CD8-positive, alpha-beta T cell (primary cell): ENCODE measurements at regions of chrX and their contacts with region 1.

Region 1: DNA sequence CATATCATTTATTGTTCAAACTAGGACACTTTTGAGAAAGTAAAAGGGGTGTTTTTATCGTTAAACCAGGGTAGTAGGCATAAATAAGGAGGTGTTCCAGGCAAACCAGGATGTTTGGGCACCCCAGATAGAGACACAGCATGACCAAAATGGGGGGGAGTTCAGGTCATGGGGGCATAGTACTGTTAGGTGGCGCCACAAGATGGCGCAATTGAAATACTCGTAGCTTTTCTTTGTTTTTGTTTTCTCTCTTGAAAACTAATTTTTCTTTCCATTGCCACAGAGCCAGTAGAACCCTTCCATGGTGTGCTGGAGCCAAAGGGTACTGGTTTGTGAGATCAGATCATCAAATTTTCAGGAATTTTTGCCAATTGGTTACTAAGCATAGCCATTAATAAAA is 283.4 kb downstream of the BCOR start:
- DNase-seq: peak in 8 of 9 experiments; percentile 3 to 76 (median 49)
- ATAC-seq: peak; percentile 64
- H3K4me3 ChIP-seq: no peak overlapping the region
- H3K4me3 Mint-ChIP-seq: no peak overlapping the region
- H3K27ac ChIP-seq: no peak overlapping the region
- H3K27ac Mint-ChIP-seq: no peak overlapping the region
- H3K4me1 ChIP-seq: no peaks in the 10 kb centered on the region
- H3K4me1 Mint-ChIP-seq: peaks cover 8% of the 10 kb centered on the region
- H3K27me3 ChIP-seq: no peaks in the 10 kb centered on the region
- H3K27me3 Mint-ChIP-seq: peaks cover 3% of the 10 kb centered on the region
- CTCF ChIP-seq: peak; percentile 56

Region 2: GRCh38 chrX:39730662-39731397 is 83.6 kb before region 1 on chrX:
- CTCF ChIA-PET with region 1: interaction called, 7 read pairs
- POLR2A ChIA-PET with region 1: no interaction called
- intact Hi-C with region 1: loop called (anchors 1 to 5 kb)
- DNase-seq: peak in 8 of 9 experiments; percentile 32 to 71 (median 52)
- ATAC-seq: peak; percentile 74
- H3K4me3 ChIP-seq: no peak overlapping the region
- H3K4me3 Mint-ChIP-seq: peak overlapping the region; percentile 29
- H3K27ac ChIP-seq: no peak overlapping the region
- H3K27ac Mint-ChIP-seq: no peak overlapping the region
- H3K4me1 ChIP-seq: no peaks in the 10 kb centered on the region
- H3K4me1 Mint-ChIP-seq: peaks cover 5% of the 10 kb centered on the region
- H3K27me3 ChIP-seq: no peaks in the 10 kb centered on the region
- H3K27me3 Mint-ChIP-seq: no peaks in the 10 kb centered on the region
- CTCF ChIP-seq: peak; percentile 52

Region 3: GRCh38 chrX:40068044-40068443 is 253.7 kb after region 1 on chrX:
- CTCF ChIA-PET with region 1: no interaction called
- POLR2A ChIA-PET with region 1: no interaction called
- intact Hi-C with region 1: loop called (anchors 10 kb)
- DNase-seq: peak in 3 of 9 experiments; percentile 30 to 59 (median 40)
- ATAC-seq: peak; percentile 63
- H3K4me3 ChIP-seq: no peak overlapping the region
- H3K4me3 Mint-ChIP-seq: no peak overlapping the region
- H3K27ac ChIP-seq: no peak overlapping the region
- H3K27ac Mint-ChIP-seq: no peak overlapping the region
- H3K4me1 ChIP-seq: peaks cover 36% of the 10 kb centered on the region
- H3K4me1 Mint-ChIP-seq: peaks cover 55% of the 10 kb centered on the region
- H3K27me3 ChIP-seq: no peaks in the 10 kb centered on the region
- H3K27me3 Mint-ChIP-seq: no peaks in the 10 kb centered on the region
- CTCF ChIP-seq: no peak

Region 4: DNA sequence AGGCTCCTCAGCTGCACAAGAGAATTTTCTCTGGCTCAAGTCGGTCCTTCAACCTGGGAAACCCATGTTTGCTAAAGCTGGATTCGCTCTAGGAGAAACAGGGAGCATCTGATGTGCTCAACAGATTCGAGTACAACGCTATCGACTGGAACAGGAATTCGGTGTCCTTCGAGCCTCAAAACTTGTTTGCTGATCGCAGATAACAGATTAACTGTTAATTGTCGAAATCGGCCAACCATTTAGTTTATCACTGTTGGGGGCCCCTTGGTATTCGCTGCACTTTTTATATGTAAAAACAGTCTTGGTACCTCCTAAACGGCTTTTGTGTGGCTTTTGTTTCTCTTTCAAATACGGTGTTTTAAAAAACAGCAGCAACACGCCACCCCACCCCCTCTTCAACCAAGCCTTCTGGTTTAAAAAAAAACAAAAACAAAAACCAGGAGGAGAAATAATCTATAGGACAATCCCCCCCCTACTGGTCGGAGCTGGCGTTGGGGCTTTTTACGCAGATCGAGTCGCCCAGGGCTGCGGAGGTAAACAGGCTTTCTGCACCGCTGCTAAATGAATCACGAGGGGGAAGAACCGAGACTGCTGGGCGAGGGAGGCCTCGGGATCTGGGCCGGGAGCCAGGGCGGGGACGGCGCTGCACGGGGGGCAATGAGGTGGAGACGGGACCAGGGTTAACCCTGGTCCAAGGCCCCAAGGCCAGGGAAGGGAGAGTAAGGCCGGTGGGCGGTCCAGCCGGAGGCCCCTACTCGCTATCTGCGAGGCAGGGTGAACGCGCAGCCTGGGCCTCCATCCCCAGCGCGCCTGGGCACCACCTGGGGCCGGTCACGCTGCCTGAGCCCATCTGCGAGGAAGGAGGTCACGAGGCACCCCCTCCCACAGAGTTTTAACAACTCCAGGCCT is 355.1 kb after region 1 on chrX:
- CTCF ChIA-PET with region 1: no interaction called
- POLR2A ChIA-PET with region 1: interaction called, 3 read pairs
- intact Hi-C with region 1: loop called in 1 of 2 experiments (anchors 5 kb)
- DNase-seq: peak; percentile 62 to 91 (median 81)
- ATAC-seq: peak; percentile 66
- H3K4me3 ChIP-seq: peak overlapping the region; percentile 42 to 61
- H3K4me3 Mint-ChIP-seq: peak overlapping the region; percentile 85
- H3K27ac ChIP-seq: peak overlapping the region; percentile 83 to 95
- H3K27ac Mint-ChIP-seq: peak overlapping the region; percentile 96
- H3K4me1 ChIP-seq: peaks cover 49% of the 10 kb centered on the region
- H3K4me1 Mint-ChIP-seq: peaks cover 48% of the 10 kb centered on the region
- H3K27me3 ChIP-seq: no peaks in the 10 kb centered on the region
- H3K27me3 Mint-ChIP-seq: no peaks in the 10 kb centered on the region
- CTCF ChIP-seq: peak; percentile 22

Region 5: GRCh38 chrX:40468033-40468846 is 653.8 kb after region 1 on chrX:
- CTCF ChIA-PET with region 1: no interaction called
- POLR2A ChIA-PET with region 1: no interaction called
- intact Hi-C with region 1: loop called (anchors 2 to 10 kb)
- DNase-seq: peak in 7 of 9 experiments; percentile 1 to 57 (median 16)
- ATAC-seq: no peak
- H3K4me3 ChIP-seq: no peak overlapping the region
- H3K4me3 Mint-ChIP-seq: no peak overlapping the region
- H3K27ac ChIP-seq: no peak overlapping the region
- H3K27ac Mint-ChIP-seq: no peak overlapping the region
- H3K4me1 ChIP-seq: peaks cover 16% of the 10 kb centered on the region
- H3K4me1 Mint-ChIP-seq: peaks cover 36% of the 10 kb centered on the region
- H3K27me3 ChIP-seq: no peaks in the 10 kb centered on the region
- H3K27me3 Mint-ChIP-seq: peaks cover 2% of the 10 kb centered on the region
- CTCF ChIP-seq: no peak